ENCODE measurements at regions of chr6 and their contacts with region 1.

Region 1: GRCh38 chr6:149335924-149336608 is 18.6 kb downstream of the TAB2 start:
- DNase-seq: peak; percentile 84
- H3K4me3 Mint-ChIP-seq: peak overlapping the region; percentile 59
- H3K27ac Mint-ChIP-seq: peak overlapping the region; percentile 97
- H3K4me1 Mint-ChIP-seq: peaks cover 82% of the 10 kb centered on the region
- H3K27me3 Mint-ChIP-seq: no peaks in the 10 kb centered on the region

Region 2: GRCh38 chr6:149140137-149140909 is 195.7 kb before region 1 on chr6:
- CTCF ChIA-PET with region 1: no interaction called
- intact Hi-C with region 1: loop called (anchors 1 kb)
- DNase-seq: peak; percentile 87
- H3K4me3 Mint-ChIP-seq: peak overlapping the region; percentile 66
- H3K27ac Mint-ChIP-seq: peak overlapping the region; percentile 94
- H3K4me1 Mint-ChIP-seq: peaks cover 42% of the 10 kb centered on the region
- H3K27me3 Mint-ChIP-seq: no peaks in the 10 kb centered on the region

Region 3: GRCh38 chr6:149271348-149272340 is 64.4 kb before region 1 on chr6:
- CTCF ChIA-PET with region 1: interaction called, 3 read pairs
- intact Hi-C with region 1: loop called (anchors 2 kb)
- DNase-seq: peak; percentile 68
- H3K4me3 Mint-ChIP-seq: peak overlapping the region; percentile 48
- H3K27ac Mint-ChIP-seq: peak overlapping the region; percentile 89
- H3K4me1 Mint-ChIP-seq: peaks cover 35% of the 10 kb centered on the region
- H3K27me3 Mint-ChIP-seq: no peaks in the 10 kb centered on the region

Region 4: DNA sequence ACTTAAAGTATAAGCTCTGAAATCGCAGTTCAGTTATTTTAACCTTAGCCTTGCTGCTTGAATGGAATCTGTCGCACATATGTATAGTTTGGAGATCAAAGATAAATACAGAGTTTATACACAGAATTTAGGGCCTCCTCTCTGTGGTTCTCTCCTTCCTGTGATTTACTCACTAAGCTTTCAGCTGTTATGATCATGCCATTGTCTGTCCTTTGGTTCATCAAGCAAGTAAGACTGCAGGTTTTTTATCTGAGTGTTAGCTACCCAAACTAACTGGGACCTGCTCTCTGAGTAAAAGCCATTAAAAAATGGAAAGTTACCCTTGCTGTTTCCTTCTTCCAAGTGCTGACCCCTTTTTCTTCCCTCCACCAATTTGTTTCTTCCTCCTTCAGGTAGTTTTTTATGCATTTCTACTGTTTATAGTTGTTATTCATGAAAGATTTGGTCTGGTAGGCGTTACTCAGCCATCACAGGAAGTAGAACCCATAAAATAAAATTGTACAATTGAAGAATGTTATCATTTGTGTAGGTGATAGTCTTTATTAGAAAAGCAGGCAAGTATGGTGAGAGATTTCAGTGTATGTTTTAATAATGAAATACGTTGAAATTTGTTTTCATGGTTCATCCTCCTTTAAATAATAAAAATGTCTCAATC is 30.3 kb after region 1 on chr6:
- CTCF ChIA-PET with region 1: interaction called, 3 read pairs
- intact Hi-C with region 1: loop called (anchors 2 kb)
- DNase-seq: no peak
- H3K4me3 Mint-ChIP-seq: no peak overlapping the region
- H3K27ac Mint-ChIP-seq: no peak overlapping the region
- H3K4me1 Mint-ChIP-seq: peaks cover 49% of the 10 kb centered on the region
- H3K27me3 Mint-ChIP-seq: no peaks in the 10 kb centered on the region

Region 5: GRCh38 chr6:149484733-149485700 is 149.0 kb after region 1 on chr6 and contains the start of gene ZC3H12D:
- CTCF ChIA-PET with region 1: no interaction called
- intact Hi-C with region 1: loop called (anchors 2 kb)
- DNase-seq: peak; percentile 92
- H3K4me3 Mint-ChIP-seq: peak within 1 kb of the TSS; percentile 94
- H3K27ac Mint-ChIP-seq: peak within 1 kb of the TSS; percentile 97
- H3K4me1 Mint-ChIP-seq: peaks cover 59% of the 10 kb centered on the region
- H3K27me3 Mint-ChIP-seq: no peaks in the 10 kb centered on the region
- total RNA-seq, gene ZC3H12D: 75.8 to 82.7 TPM